ENCODE measurements at regions of chr6 and their contacts with region 1.

Region 1: GRCh38 chr6:47581591-47581990 is 104.0 kb downstream of the CD2AP start:
- DNase-seq: no peak

Region 2: DNA sequence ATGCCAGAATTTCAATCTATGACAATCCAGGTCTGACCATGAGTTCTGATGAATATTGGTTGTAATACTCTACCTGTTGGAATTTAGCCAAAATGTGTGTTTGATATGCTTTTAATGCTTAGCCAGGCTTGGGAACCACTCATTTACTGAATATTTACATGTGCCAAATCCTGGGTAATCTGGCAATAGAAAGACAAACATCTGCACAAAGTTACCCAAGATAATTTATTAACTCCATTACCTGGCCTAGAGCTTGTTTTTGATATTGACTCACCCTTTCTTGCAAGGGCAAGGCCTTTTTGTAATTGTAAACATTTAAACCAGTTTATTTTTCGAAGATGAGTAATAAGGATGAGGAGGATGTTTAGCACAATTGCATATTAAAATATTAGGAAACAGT is 117.5 kb before region 1 on chr6:
- in situ Hi-C with region 1: no loop called
- DNase-seq: no peak

Region 3: DNA sequence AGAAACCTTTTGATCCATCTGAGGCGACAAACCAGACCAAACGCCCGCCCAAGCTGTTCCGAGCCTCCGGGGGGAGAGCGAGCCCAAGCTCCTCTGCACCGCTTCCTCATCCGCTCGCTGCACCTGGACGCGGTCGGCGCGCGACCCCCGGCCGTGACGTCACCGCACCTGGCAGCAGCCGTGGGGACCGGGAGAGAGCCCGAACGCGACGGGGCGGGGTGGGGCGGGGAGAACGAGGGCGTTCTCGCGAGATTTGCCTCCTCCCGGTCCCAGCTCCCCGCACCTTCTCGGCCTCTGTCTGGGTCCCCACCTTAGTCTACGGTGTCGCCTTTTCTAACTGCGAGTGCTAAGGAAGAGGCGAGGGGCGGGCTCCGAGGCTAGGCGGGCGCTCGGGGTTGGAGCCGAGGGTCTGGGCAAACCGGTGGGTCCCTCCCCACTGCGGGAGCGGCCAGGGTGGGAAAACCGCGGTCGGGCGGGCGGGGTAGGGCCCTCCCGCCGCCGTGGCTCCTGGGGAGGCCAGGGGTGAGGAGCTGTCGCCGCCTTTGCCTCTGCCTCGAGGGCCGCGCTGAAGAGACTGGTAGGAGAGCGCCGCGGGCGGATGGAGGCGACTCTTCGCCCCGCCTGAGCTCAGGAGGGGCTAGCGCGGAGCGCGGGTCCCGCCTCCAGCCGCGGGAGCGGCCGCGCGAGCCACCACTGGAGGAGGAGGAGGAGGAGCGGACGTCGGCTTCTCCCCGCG is 103.9 kb before region 1 on chr6 and contains the start of gene CD2AP:
- in situ Hi-C with region 1: loop called (anchors 25 kb)
- DNase-seq: peak; percentile 89
- total RNA-seq, gene CD2AP: 11.8 and 19.8 TPM in 2 replicates

Region 4: DNA sequence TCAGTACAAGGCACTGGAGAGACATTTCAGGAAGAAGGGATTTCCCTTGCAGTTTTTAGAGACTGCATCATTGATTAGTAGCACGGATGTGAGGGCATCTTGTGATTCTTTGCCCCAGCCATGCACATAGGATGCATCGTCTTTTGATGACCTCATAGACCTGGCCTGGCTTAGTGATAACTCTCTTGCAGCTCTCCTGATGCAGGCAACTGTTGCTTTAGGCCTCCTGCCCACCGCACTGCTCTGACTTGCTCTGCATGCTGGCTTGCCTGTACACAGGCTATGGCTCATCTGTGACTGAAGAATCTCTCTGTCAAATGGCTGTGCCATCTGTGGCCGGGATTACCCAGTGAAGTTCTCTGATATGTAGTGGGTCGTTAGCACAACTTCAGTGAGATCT is 737.1 kb after region 1 on chr6:
- in situ Hi-C with region 1: no loop called
- DNase-seq: no peak